GM12878 (cell line): ENCODE measurements at regions of chr15 and their contacts with region 1.

Region 1: GRCh38 chr15:90249203-90249863 is at the start of gene TTLL13:
- DNase-seq: no peak
- ATAC-seq: peak; percentile 95
- H3K4me3 ChIP-seq: peak within 1 kb of the TSS; percentile 55; the same call in 1 of the 2 replicates
- H3K27ac ChIP-seq: no peak within 1 kb of the TSS
- H3K4me1 ChIP-seq: peaks cover 2% of the 10 kb centered on the region; the same call in 1 of the 2 replicates
- H3K27me3 ChIP-seq: peaks cover 0 to 2% of the 10 kb centered on the region in 2 experiments; a peak in 1 of 4 replicates
- CTCF ChIP-seq: no peak
- EP300 ChIP-seq: no peak
- POLR2A ChIP-seq: no peak
- RAD21 ChIP-seq: no peak
- polyA plus RNA-seq, gene TTLL13: 0.03 TPM in 1 of 2 experiments, not detected in the other

Region 2: DNA sequence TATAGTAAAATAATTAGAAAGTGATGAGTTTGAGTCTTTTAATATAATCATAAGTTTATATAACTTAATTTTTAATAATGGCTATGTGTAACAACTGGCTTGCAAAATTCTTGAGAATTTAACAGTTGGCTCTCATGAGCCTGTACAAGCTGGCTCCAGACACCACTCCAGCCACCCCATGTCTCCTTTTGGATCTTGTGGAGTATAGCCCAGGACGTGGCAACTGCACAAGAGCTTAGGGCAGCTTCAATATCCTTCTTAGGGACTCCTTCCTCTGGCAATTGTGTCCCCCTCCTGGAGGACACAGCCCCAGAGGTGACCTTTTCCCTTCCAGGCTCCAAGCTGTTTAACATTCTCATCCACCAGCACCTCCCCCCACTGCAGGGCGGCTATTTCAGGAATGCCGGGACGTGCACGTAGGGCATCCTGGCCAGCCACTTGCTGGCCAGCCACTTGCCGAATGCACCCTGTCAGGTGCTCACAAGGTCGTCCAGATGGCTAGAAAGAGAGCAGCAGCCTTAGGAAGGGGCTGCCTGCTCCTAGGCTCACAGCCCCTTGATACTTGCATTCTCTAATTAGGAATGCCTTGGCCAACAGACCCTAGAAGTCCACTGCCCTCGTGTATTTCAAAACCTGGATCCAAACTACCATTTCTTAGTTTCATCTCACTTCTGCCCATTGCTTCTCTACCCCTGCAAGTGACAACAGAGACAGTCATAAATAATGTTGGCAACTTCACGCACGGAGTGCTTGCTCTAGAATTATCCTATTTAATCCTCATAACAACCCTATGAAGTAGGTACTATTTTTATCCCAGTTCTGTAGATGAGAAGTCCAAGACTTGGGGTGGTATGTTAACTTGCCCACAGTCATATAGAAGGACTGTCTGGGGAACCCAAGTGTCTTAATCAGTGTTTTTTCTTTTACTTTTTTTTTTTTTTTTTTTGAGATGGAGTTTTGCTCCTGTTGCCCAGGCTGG is 122.6 kb before region 1 on chr15:
- CTCF ChIA-PET with region 1: no interaction called
- POLR2A ChIA-PET with region 1: no interaction called
- RAD21 ChIA-PET with region 1: no interaction called
- SMC1A ChIA-PET with region 1: no interaction called
- in situ Hi-C with region 1: no loop called
- intact Hi-C with region 1: no loop called
- DNase-seq: no peak
- ATAC-seq: no peak
- H3K4me3 ChIP-seq: no peak overlapping the region
- H3K27ac ChIP-seq: no peak overlapping the region
- H3K4me1 ChIP-seq: peaks cover 3% of the 10 kb centered on the region; the same call in 1 of the 2 replicates
- H3K27me3 ChIP-seq: no peaks in the 10 kb centered on the region
- CTCF ChIP-seq: no peak
- EP300 ChIP-seq: no peak
- POLR2A ChIP-seq: no peak
- RAD21 ChIP-seq: no peak

Region 3: DNA sequence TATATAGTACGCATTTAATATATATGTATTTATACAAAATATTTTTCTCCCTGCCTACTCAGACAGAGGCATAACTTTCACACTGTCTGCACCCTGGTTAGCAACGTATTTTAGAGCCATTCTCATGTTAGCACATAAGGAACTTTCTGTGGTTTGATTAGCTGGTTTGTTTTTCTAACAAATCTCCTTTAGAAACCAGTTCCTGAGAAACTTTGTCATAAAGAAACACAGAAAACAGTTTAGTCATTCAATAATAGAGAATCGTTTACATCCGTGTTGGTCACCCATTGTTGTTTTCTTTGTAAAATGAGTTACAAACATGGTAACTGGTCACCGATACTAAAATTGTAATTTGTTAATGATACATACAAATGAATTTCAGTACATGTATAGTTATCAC is 10.2 kb after region 1 on chr15:
- CTCF ChIA-PET with region 1: interaction called, 3 read pairs
- POLR2A ChIA-PET with region 1: interaction called, 10 read pairs
- RAD21 ChIA-PET with region 1: no interaction called
- SMC1A ChIA-PET with region 1: interaction called, 3 read pairs
- in situ Hi-C with region 1: no loop called
- intact Hi-C with region 1: no loop called
- DNase-seq: peak; percentile 65
- ATAC-seq: peak; percentile 89
- H3K4me3 ChIP-seq: no peak overlapping the region
- H3K27ac ChIP-seq: peak overlapping the region; percentile 79
- H3K4me1 ChIP-seq: peaks cover 31% of the 10 kb centered on the region
- H3K27me3 ChIP-seq: no peaks in the 10 kb centered on the region; a peak in 1 of 4 replicates
- CTCF ChIP-seq: no peak
- EP300 ChIP-seq: peak; percentile 74 to 87; a peak in 3 of 4 replicates
- POLR2A ChIP-seq: no peak
- RAD21 ChIP-seq: no peak

Region 4: DNA sequence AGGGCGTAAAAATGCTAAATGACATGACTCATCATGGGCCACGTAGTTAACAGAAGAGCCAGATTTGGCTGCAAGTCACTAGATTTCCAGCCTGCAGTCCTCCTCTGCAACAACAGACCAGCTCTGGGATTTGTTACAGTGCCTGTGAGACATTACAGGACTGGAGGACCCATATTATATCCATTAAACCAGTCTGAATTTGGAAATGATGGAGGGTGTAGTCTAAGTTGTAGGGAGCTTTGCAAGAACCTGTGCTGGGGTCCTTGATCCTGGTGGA is 113.5 kb after region 1 on chr15:
- CTCF ChIA-PET with region 1: no interaction called
- POLR2A ChIA-PET with region 1: no interaction called
- RAD21 ChIA-PET with region 1: no interaction called
- SMC1A ChIA-PET with region 1: no interaction called
- in situ Hi-C with region 1: no loop called
- intact Hi-C with region 1: no loop called
- DNase-seq: no peak
- ATAC-seq: no peak
- H3K4me3 ChIP-seq: no peak overlapping the region
- H3K27ac ChIP-seq: no peak overlapping the region
- H3K4me1 ChIP-seq: no peaks in the 10 kb centered on the region
- H3K27me3 ChIP-seq: no peaks in the 10 kb centered on the region
- CTCF ChIP-seq: no peak
- EP300 ChIP-seq: no peak
- POLR2A ChIP-seq: no peak
- RAD21 ChIP-seq: no peak

Region 5: GRCh38 chr15:90799639-90800170 is 550.4 kb after region 1 on chr15:
- CTCF ChIA-PET with region 1: no interaction called
- POLR2A ChIA-PET with region 1: no interaction called
- RAD21 ChIA-PET with region 1: no interaction called
- SMC1A ChIA-PET with region 1: no interaction called
- in situ Hi-C with region 1: no loop called
- intact Hi-C with region 1: no loop called
- DNase-seq: no peak
- ATAC-seq: no peak
- H3K4me3 ChIP-seq: no peak overlapping the region
- H3K27ac ChIP-seq: no peak overlapping the region
- H3K4me1 ChIP-seq: no peaks in the 10 kb centered on the region
- H3K27me3 ChIP-seq: no peaks in the 10 kb centered on the region
- CTCF ChIP-seq: no peak
- EP300 ChIP-seq: no peak
- POLR2A ChIP-seq: no peak
- RAD21 ChIP-seq: no peak